GM10248 (cell line): ENCODE measurements at regions of chr12 and their contacts with region 1.

Region 1: GRCh38 chr12:53047221-53048042 is 2.4 kb upstream of the TNS2 start:
- DNase-seq: peak; percentile 88
- CTCF ChIP-seq: peak; percentile 75

Region 2: DNA sequence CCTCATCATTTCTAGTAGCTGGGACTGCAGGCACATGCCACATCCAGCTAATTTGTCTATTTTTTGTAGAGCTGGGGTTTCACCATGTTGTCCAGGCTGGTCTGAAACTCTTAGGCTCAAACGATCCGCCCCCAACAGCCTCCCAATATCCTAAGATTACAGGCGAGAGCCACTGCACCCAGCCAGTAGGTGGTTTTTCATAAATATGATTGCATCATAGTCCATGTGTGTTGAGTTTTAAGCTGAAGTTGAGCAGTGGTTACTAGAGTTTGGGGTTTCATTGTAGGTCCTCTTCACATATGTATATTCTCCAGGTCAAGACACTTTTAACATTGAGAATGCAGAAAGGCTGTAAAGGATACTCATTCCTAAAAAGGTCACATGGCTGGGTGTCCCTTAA is 10.6 kb before region 1 on chr12:
- CTCF ChIA-PET with region 1: interaction called, 23 read pairs
- POLR2A ChIA-PET with region 1: no interaction called
- DNase-seq: no peak
- CTCF ChIP-seq: no peak